ENCODE measurements at regions of chr15 and their contacts with region 1.

Region 1: DNA sequence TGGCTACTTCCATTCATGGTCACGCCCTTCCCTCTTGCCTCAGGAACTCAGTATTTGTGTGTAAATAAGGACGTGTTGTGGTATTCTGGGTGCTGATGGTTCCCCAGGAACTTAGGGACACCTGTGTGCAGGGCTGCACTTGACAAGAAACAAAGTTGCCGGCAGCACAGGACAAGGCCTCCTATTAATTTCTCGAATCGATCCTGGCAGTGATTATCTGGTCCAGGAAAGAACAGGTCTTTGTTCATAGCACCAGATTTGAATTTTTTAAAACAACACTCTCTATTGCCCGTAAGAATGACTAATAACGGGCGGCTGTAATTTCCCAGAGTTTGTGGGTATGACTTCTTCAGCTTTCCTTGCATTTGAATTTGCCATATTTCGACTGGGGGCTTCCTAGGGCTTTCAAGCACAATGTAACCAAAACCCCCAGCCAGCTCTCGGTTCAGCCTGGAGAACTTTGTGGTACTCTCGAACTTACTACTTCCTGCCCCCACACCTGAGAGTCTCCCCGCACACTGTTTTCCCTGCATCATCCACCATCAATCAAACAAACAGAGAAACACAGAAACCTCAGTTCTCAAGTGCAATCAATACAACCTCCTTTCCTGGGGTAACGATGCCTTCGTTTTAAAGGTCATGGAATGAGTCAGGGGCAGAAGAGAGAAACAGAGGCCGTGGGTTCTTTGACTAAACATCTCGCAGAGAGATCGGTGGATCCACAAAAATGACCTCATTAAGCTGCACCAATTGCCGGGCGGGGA is 241.7 kb upstream of the ICE2 start:
- DNase-seq: peak in 8 of 9 donors; percentile 31 to 68 (median 44)
- ATAC-seq: peak; percentile 81
- H3K4me3 ChIP-seq: peak overlapping the region; percentile 47
- H3K4me3 Mint-ChIP-seq: peak overlapping the region; percentile 64 to 84 (median 80)
- H3K27ac ChIP-seq: peak overlapping the region; percentile 6
- H3K27ac Mint-ChIP-seq: peak overlapping the region; percentile 63 to 92 (median 77)
- H3K4me1 ChIP-seq: peaks cover 27% of the 10 kb centered on the region in 2 donors
- H3K4me1 Mint-ChIP-seq: peaks cover 29 to 65% (median 53%) of the 10 kb centered on the region in 7 donors
- H3K27me3 ChIP-seq: no peaks in the 10 kb centered on the region
- H3K27me3 Mint-ChIP-seq: no peaks in the 10 kb centered on the region

Region 2: DNA sequence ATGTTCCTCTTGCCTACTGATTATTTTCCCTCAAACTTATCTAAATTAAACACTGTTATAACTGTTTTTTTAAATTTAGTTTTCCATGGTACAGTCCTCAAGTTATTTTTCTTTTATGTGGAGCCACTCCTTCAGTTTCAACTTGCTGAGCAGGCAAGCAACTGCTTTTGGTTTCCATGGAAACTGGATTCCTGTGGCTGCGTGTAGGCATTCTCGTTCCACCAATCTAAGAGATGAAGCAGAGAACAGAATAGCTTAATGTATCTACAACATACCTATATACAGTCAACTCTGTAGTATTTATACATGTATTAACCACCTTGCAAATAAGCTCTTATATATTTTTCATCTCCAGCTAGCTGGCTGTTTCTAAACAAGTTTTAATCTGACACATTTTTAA is 297.1 kb before region 1 on chr15:
- CTCF ChIA-PET with region 1: no interaction called
- POLR2A ChIA-PET with region 1: no interaction called
- intact Hi-C with region 1: no loop called
- DNase-seq: no peak
- ATAC-seq: no peak
- H3K4me3 ChIP-seq: no peak overlapping the region
- H3K4me3 Mint-ChIP-seq: no peak overlapping the region
- H3K27ac ChIP-seq: no peak overlapping the region
- H3K27ac Mint-ChIP-seq: peak overlapping the region in 3 of 9 donors; percentile 19 to 42 (median 20)
- H3K4me1 ChIP-seq: no peaks in the 10 kb centered on the region
- H3K4me1 Mint-ChIP-seq: peaks cover 0 to 16% (median 3%) of the 10 kb centered on the region in 7 donors
- H3K27me3 ChIP-seq: no peaks in the 10 kb centered on the region
- H3K27me3 Mint-ChIP-seq: no peaks in the 10 kb centered on the region

Region 3: GRCh38 chr15:60592371-60593169 is 128.1 kb before region 1 on chr15:
- CTCF ChIA-PET with region 1: no interaction called
- POLR2A ChIA-PET with region 1: interaction called, 4 read pairs
- intact Hi-C with region 1: loop called in 1 of 2 experiments (anchors 2 kb)
- DNase-seq: peak; percentile 72 to 89 (median 86)
- ATAC-seq: peak; percentile 95
- H3K4me3 ChIP-seq: peak overlapping the region; percentile 75
- H3K4me3 Mint-ChIP-seq: peak overlapping the region; percentile 84 to 89 (median 86)
- H3K27ac ChIP-seq: peak overlapping the region; percentile 96
- H3K27ac Mint-ChIP-seq: peak overlapping the region; percentile 83 to 93 (median 85)
- H3K4me1 ChIP-seq: peaks cover 6 to 29% of the 10 kb centered on the region in 2 donors
- H3K4me1 Mint-ChIP-seq: peaks cover 19 to 53% (median 48%) of the 10 kb centered on the region in 7 donors
- H3K27me3 ChIP-seq: no peaks in the 10 kb centered on the region
- H3K27me3 Mint-ChIP-seq: peaks cover 0 to 4% (median 0%) of the 10 kb centered on the region in 5 donors

Region 4: DNA sequence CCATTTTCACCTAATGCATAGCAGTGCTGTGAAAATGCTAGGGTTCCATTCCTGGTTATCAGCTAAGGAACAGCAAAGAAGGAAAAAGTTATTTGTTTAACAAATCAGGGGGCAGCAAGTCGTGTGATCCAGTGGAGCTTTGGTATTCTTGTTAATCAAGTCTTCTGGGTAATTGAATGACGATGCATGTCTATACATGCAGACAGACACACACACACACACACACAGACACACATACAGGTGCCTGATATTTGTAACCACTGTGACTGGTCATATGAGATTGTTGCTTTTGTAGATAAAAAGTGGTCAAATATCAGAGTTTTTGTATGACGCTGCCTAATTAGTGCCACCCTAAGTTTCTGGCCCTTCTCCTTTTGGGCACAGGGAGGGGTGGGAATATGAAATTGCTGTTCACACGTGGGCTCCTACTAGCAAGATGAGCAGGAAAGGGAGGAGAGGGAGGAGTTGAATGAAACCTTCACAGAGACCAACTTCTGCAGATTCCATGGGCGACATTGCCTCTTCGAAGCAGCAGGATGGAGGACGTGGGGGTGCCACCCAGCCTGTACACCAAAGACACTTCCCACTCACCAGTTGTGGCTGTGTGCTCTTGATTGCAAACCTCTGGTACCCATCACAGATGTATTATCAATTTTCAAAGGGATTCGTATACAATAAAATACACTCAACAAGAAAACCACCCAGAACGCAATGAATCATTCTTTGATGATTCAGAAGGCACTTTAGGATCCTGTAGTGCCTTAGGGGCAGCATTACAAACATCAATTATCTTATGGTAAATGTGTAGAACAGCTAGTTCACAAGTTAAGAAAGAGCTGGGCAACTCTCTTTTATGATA is 40.2 kb after region 1 on chr15:
- CTCF ChIA-PET with region 1: no interaction called
- POLR2A ChIA-PET with region 1: no interaction called
- intact Hi-C with region 1: loop called in 1 of 2 experiments (anchors 5 kb)
- DNase-seq: peak in 1 of 9 donors; percentile 25
- ATAC-seq: no peak
- H3K4me3 ChIP-seq: no peak overlapping the region
- H3K4me3 Mint-ChIP-seq: no peak overlapping the region
- H3K27ac ChIP-seq: no peak overlapping the region
- H3K27ac Mint-ChIP-seq: no peak overlapping the region
- H3K4me1 ChIP-seq: no peaks in the 10 kb centered on the region
- H3K4me1 Mint-ChIP-seq: peaks cover 3 to 25% (median 11%) of the 10 kb centered on the region in 7 donors
- H3K27me3 ChIP-seq: no peaks in the 10 kb centered on the region
- H3K27me3 Mint-ChIP-seq: peaks cover 0 to 6% (median 0%) of the 10 kb centered on the region in 5 donors

Region 5: DNA sequence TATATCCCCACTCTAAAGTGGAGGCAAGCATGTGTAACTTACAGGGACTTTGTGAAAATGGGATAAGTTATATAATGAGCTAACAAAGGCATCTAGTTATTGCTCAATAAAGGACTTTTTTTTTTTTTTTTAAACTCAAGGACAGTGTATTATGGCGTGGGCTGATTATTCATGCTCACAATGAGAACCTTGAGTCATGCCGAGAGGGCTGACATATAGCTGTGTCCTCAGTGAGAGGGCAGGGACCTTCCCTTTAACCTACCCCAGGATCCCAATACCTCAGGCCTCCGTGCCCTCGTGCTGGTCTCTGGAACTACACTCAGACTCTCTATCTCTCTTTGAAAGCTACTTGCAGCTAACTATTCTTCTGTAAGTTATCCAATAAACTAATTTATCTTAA is 78.1 kb after region 1 on chr15:
- CTCF ChIA-PET with region 1: no interaction called
- POLR2A ChIA-PET with region 1: no interaction called
- intact Hi-C with region 1: loop called in 1 of 2 experiments (anchors 5 kb)
- DNase-seq: peak in 1 of 9 donors; percentile 48
- ATAC-seq: peak; percentile 36
- H3K4me3 ChIP-seq: no peak overlapping the region
- H3K4me3 Mint-ChIP-seq: peak overlapping the region in 1 of 10 donors; percentile 18
- H3K27ac ChIP-seq: no peak overlapping the region
- H3K27ac Mint-ChIP-seq: peak overlapping the region in 2 of 9 donors; percentile 20 to 36
- H3K4me1 ChIP-seq: peaks cover 36 to 37% of the 10 kb centered on the region in 2 donors
- H3K4me1 Mint-ChIP-seq: peaks cover 29 to 71% (median 50%) of the 10 kb centered on the region in 7 donors
- H3K27me3 ChIP-seq: no peaks in the 10 kb centered on the region
- H3K27me3 Mint-ChIP-seq: no peaks in the 10 kb centered on the region

Region 6: GRCh38 chr15:60899322-60899966 is 178.8 kb after region 1 on chr15:
- CTCF ChIA-PET with region 1: no interaction called
- POLR2A ChIA-PET with region 1: no interaction called
- intact Hi-C with region 1: loop called in 1 of 2 experiments (anchors 2 kb)
- DNase-seq: peak in 2 of 9 donors; percentile 1 to 36
- ATAC-seq: peak; percentile 81
- H3K4me3 ChIP-seq: no peak overlapping the region
- H3K4me3 Mint-ChIP-seq: peak overlapping the region in 1 of 10 donors; percentile 63
- H3K27ac ChIP-seq: no peak overlapping the region
- H3K27ac Mint-ChIP-seq: peak overlapping the region in 1 of 9 donors; percentile 59
- H3K4me1 ChIP-seq: no peaks in the 10 kb centered on the region
- H3K4me1 Mint-ChIP-seq: peaks cover 0 to 50% (median 0%) of the 10 kb centered on the region in 7 donors
- H3K27me3 ChIP-seq: no peaks in the 10 kb centered on the region
- H3K27me3 Mint-ChIP-seq: peaks cover 0 to 11% (median 0%) of the 10 kb centered on the region in 5 donors

Measured in naive thymus-derived CD4-positive, alpha-beta T cell (primary cell).